PC-3 (cell line): ENCODE measurements at regions of chr3 and their contacts with region 1.

Region 1: DNA sequence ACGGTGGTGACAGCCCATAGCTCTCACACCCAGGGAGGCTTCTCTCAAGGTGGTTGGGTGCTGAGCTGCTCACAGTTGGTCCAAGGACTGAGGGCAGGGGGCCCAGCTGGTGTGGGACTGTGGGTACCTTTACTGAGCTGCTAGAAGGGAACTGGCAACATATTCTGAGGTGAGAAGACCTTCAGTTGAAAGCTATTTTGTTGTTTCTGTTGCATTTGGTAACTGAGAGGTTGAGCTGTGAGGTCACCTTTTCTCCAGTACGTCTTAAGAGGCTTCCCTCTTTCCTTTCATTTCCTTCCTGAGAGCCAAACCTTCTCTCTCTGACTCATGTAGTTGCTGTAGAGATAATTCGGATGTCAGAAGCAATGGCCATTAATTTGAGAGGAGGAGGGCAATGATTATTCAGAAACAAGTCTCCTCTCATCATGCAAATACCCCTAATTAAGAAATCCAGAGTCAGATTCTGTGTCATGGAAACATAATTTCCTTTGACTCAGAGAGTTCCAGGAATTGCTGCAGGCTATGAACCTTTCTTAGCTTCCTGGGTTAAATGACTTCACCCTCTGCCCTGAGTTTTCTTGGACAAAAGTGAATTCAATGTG is 58.9 kb upstream of the GSK3B start:
- DNase-seq: peak; percentile 93
- ATAC-seq: peak; percentile 88
- H3K4me3 ChIP-seq: peak overlapping the region; percentile 18; the same call in 1 of the 2 replicates
- H3K27ac ChIP-seq: peak overlapping the region; percentile 89
- H3K4me1 ChIP-seq: peaks cover 30% of the 10 kb centered on the region
- H3K27me3 ChIP-seq: no peaks in the 10 kb centered on the region
- CTCF ChIP-seq: no peak

Region 2: DNA sequence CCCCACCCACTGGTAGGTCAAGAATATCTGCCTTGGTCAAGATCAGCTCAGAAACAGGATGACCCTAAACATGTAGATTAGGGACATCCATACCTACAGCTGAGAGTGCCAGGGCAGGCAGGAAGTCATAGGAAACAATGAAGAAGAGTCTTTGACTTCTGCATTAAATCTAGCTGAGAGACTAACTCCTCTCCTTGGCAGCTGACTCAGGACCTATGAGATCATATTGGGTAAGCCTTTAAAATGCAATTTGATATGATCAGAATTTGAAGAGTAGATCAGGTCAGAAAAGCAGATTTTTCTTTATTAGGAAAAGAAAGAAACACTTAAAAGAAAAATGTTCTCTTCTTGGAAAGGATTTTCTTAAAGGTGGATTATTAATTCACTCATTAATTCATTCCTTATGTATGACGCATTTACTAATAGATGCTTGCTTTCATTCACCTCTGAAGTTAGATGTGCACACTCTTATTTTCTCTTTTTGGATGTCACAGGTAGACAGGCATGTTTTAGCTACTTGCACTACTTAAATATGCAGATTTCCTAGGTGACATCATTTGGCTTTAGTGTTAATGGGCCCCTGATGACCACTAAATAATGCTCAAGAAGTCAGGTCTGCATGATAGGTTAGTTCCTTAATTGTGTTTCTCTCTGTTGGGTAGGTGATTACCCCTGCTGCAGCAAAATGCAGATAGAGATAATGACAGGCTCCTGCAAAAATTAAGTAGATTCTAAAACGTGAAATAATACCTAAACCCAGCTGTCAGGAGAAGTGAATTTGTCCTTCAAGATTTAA is 23.3 kb before region 1 on chr3:
- CTCF ChIA-PET with region 1: no interaction called
- POLR2A ChIA-PET with region 1: no interaction called
- intact Hi-C with region 1: no loop called
- DNase-seq: peak; percentile 72
- ATAC-seq: peak; percentile 84
- H3K4me3 ChIP-seq: no peak overlapping the region
- H3K27ac ChIP-seq: no peak overlapping the region
- H3K4me1 ChIP-seq: peaks cover 12% of the 10 kb centered on the region
- H3K27me3 ChIP-seq: no peaks in the 10 kb centered on the region
- CTCF ChIP-seq: no peak

Region 3: GRCh38 chr3:120170223-120170622 is 17.0 kb after region 1 on chr3:
- CTCF ChIA-PET with region 1: no interaction called
- POLR2A ChIA-PET with region 1: no interaction called
- intact Hi-C with region 1: loop called (anchors 1 kb)
- DNase-seq: peak; percentile 98
- ATAC-seq: peak; percentile 99
- H3K4me3 ChIP-seq: 0 out of 2 replicates have a peak overlapping the region, but pooled peaks have one; percentile 8
- H3K27ac ChIP-seq: peak overlapping the region; percentile 71
- H3K4me1 ChIP-seq: peaks cover 31% of the 10 kb centered on the region
- H3K27me3 ChIP-seq: no peaks in the 10 kb centered on the region
- CTCF ChIP-seq: no peak